GM18951 (cell line): ENCODE measurements at regions of chr17 and their contacts with region 1.

Region 1: GRCh38 chr17:29807520-29808351 is 122.3 kb downstream of the SSH2 start:
- POLR2A ChIP-seq: no peak

Region 2: GRCh38 chr17:30084788-30085187 is 277.1 kb after region 1 on chr17:
- in situ Hi-C with region 1: loop called (anchors 10 kb)
- POLR2A ChIP-seq: no peak